Prostate gland (tissue), 2 donors: ENCODE measurements at regions of chr22 and their contacts with region 1.

Region 1: GRCh38 chr22:45096256-45096907 is 67.3 kb upstream of the NUP50 start:
- DNase-seq: peak; percentile 62
- H3K4me3 ChIP-seq: no peak overlapping the region
- H3K27ac ChIP-seq: no peak overlapping the region
- H3K4me1 ChIP-seq: no peaks in the 10 kb centered on the region
- H3K27me3 ChIP-seq: no peaks in the 10 kb centered on the region
- CTCF ChIP-seq: peak in 3 of 4 experiments; percentile 60 to 83 (median 77)
- POLR2A ChIP-seq: no peak

Region 2: GRCh38 chr22:44819971-44820631 is 276.3 kb before region 1 on chr22:
- intact Hi-C with region 1: loop called (anchors 5 kb)
- DNase-seq: no peak
- H3K4me3 ChIP-seq: no peak overlapping the region
- H3K27ac ChIP-seq: no peak overlapping the region
- H3K4me1 ChIP-seq: no peaks in the 10 kb centered on the region
- H3K27me3 ChIP-seq: no peaks in the 10 kb centered on the region
- CTCF ChIP-seq: no peak
- POLR2A ChIP-seq: no peak

Region 3: DNA sequence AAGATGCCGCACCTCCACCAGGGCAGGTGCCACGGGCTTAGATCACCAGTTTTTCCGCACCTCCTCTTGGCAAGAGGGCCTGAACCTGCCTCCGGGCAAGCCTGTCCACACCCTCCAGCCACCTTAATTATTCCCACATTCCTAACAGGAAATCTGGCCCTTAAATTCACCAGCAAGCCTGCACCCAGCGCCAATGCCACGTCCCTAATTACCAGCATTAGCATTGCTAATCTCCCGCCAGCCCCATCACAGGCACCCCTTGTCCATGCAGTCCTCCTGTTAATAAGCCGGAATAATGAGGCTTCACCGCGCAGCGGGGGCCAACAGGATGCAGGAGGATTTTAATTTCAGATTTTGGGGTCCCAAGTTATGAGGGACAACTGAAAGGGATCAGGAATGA is 156.3 kb before region 1 on chr22:
- intact Hi-C with region 1: no loop called
- DNase-seq: no peak
- H3K4me3 ChIP-seq: no peak overlapping the region
- H3K27ac ChIP-seq: no peak overlapping the region
- H3K4me1 ChIP-seq: no peaks in the 10 kb centered on the region
- H3K27me3 ChIP-seq: no peaks in the 10 kb centered on the region
- CTCF ChIP-seq: no peak
- POLR2A ChIP-seq: no peak